ENCODE measurements at regions of chr15 and their contacts with region 1.

Region 1: DNA sequence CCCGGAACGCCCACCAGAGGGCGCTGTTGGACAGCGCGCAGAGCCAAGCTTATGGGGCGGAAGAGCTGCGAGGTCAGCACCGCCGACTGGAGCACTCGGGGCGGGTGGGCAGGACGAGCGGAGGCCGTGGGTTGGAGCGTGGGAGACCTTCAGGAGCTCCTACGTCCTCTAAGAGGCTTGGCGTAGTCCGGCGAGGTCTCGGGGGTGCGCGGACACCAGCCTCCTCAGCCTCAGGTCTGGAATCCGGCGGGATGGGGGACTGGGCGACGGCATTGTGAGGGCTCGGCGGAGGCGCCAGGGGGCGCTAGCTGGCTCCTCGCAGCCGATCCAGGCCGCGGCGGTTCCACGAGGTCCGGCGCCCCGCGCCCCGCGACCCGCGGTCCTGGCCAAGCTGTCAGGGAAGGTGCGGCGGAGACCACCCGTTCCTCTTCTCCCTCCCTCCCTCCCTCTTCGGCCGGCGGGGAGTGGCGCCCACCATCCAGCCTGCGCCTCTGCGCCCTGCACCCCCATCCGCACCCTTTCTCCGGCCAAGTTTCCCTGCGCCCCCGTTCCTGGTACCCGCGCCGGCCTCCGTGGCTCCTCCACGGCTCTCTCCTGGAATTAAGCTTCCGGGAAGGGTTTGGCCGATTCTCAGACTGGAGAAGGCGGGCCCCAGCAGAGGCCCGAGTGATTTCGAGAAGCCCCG is 24.3 kb upstream of the POLG start:
- DNase-seq: peak; percentile 56
- ATAC-seq: peak; percentile 96
- H3K4me3 ChIP-seq: peak overlapping the region; percentile 42
- H3K27ac ChIP-seq: no peak overlapping the region
- H3K4me1 ChIP-seq: no peaks in the 10 kb centered on the region
- H3K27me3 ChIP-seq: peaks cover 80% of the 10 kb centered on the region
- CTCF ChIP-seq: peak; percentile 80
- POLR2A ChIP-seq: no peak
- RAD21 ChIP-seq: peak; percentile 87

Region 2: DNA sequence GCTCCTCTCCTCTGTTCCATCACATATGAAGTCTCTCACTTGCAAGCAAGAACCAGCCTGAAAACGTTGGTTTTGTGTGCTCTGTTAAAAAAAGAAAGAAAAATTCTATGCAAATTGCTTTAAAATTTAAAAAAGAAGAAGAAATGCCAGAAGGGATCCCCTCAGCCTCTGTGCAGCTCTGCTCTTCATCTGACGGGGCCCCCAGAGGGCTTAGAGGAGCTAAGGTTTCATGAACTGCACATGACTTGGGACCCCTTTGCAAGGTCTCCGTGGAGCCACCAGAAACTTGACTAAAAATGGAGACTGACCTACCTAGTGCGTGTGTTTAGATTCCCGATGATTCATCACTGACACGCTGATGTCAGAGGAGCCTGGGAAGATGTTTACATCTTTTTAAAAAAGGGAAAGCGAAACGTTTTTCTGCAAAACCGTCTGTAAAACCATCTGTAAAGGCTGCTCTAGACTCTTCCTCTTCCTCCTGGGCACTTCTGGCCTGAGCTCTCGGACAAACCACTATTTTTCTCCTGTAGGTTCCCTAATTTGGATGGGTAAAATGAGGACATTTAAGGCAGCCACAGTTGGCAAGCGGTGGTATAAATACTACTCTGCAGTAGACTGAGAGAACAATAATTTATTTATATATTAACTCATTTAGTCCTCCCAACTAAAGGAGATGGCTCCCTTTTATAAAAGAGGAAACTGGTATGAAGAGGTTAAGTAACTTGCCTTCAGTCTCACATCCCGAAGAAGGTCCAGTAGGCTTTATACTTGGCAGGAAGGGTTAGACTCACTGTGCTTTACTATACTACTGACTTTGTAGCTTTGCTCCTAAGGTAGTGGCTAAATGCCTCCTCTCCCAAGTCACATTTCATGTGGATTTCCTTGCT is 43.0 kb after region 1 on chr15:
- CTCF ChIA-PET with region 1: interaction called, 5 read pairs
- POLR2A ChIA-PET with region 1: no interaction called
- dilution Hi-C with region 1: no loop called
- in situ Hi-C with region 1: no loop called
- intact Hi-C with region 1: loop called (anchors 2 kb)
- DNase-seq: peak; percentile 85
- ATAC-seq: peak; percentile 76
- H3K4me3 ChIP-seq: peak overlapping the region; percentile 33; the same call in 1 of the 2 replicates
- H3K27ac ChIP-seq: no peak overlapping the region
- H3K4me1 ChIP-seq: no peaks in the 10 kb centered on the region
- H3K27me3 ChIP-seq: peaks cover 71% of the 10 kb centered on the region
- CTCF ChIP-seq: no peak
- POLR2A ChIP-seq: no peak
- RAD21 ChIP-seq: no peak

Region 3: DNA sequence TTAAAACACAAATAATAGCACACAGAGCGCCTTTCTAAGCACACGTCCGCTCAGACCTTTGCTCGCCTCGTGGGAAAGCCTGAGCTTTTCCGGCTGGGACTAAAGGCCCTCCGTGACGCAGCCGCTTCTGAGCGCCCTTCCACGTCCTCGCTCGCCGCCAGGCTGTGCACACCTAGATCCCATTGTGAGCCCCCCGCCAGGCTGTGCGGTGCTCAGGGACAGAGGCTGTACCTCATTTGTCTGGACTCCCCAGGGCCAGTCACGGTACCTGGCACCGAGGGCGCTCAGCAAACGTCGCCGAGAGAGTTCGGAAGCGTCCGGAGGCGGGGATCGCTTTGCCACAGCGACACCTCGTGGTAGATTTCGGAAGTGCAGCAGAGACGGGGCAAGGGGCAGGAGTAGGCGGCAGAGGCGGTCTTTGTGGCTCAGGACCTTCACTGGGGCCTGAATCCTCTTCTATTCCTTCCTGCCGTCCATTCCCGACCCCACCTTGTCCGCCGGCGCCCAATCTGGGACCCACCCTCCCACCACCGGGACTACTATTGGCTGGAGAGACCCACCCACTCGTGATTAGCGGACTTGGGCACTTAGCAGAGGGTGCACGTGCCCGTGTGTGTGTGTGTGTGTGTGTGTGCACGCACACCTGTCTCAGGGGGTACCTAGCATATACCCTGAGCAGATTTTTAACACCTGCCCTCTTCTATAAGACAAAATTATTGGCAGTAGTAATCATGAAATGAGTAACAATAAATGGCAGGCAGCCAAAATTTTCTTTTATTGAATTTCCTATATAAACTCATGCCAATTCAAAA is 71.8 kb after region 1 on chr15:
- CTCF ChIA-PET with region 1: interaction called, 37 read pairs
- POLR2A ChIA-PET with region 1: no interaction called
- dilution Hi-C with region 1: no loop called
- in situ Hi-C with region 1: loop called (anchors 5 kb)
- intact Hi-C with region 1: loop called (anchors 1 kb)
- DNase-seq: peak; percentile 43
- ATAC-seq: peak; percentile 99
- H3K4me3 ChIP-seq: peak overlapping the region; percentile 42
- H3K27ac ChIP-seq: no peak overlapping the region
- H3K4me1 ChIP-seq: no peaks in the 10 kb centered on the region
- H3K27me3 ChIP-seq: peaks cover 43% of the 10 kb centered on the region
- CTCF ChIP-seq: peak; percentile 90
- POLR2A ChIP-seq: no peak
- RAD21 ChIP-seq: peak; percentile 81

Region 4: DNA sequence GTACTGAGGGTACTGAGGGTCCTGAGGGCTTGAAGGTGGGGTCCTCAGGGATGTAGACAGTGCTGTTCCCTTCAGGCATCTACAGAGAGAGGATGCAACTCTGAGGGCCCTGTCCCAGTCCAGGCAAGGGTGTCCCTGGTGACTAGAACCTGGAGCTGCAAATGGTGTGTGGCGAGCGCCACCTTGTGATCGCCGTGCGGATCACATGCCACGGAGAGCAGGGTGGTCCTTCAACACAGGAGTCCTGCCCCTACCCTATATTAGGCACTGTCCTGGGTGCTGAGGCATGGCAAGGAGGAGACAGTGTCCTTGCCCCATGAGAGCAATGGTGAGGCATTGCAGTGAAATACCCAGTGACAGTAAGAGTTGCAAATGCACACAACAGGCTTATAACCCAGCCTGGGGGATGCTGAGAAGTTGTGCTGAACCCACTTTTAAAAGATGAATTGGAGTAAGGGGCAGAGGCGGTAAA is 113.9 kb after region 1 on chr15:
- CTCF ChIA-PET with region 1: interaction called, 6 read pairs
- POLR2A ChIA-PET with region 1: no interaction called
- dilution Hi-C with region 1: no loop called
- in situ Hi-C with region 1: no loop called
- intact Hi-C with region 1: loop called (anchors 1 kb)
- DNase-seq: peak; percentile 47
- ATAC-seq: peak; percentile 92
- H3K4me3 ChIP-seq: no peak overlapping the region
- H3K27ac ChIP-seq: no peak overlapping the region
- H3K4me1 ChIP-seq: no peaks in the 10 kb centered on the region
- H3K27me3 ChIP-seq: peaks cover 32% of the 10 kb centered on the region
- CTCF ChIP-seq: peak; percentile 75
- POLR2A ChIP-seq: no peak
- RAD21 ChIP-seq: peak; percentile 84

Region 5: DNA sequence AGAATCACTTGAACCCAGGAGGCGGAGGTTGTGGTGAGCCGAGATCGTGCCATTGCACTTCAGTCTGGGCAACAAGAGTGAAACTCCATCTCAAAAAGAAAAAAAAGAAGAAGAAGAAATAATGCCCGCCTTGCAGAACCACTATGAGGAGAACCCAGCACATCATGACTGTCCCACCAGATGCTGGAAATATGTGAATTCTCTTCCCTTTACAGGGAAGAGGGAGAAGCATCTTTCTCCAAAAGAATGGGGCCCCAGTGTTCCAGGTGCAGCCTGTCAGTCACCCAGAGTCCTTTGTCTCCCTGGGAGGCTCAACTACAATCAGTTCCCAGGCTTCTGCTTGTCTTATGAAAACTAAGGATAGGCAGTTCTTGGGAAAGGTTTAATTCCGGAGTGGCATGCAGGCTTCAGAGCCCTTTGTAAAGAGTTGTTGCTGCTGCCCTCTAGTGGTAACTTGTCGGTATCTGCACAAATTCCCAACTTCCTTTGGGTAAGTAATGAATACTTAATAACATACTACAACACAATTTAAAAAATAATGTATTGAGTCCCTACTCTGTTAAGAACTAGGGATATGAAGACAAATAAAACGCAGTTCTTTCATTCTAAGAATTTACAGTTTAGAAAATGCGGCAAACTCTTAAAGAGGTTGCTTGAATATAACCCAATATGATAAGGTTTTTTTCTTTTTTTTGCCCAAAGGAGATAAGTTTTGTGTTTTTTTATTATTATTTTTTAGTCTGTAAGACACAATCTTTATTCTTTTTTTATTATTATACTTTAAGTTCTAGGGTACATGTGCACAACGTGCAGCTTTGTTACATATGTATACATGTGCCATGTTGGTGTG is 197.7 kb after region 1 on chr15:
- CTCF ChIA-PET with region 1: no interaction called
- POLR2A ChIA-PET with region 1: no interaction called
- dilution Hi-C with region 1: no loop called
- in situ Hi-C with region 1: no loop called
- intact Hi-C with region 1: loop called (anchors 1 kb)
- DNase-seq: peak; percentile 77
- ATAC-seq: peak; percentile 95
- H3K4me3 ChIP-seq: no peak overlapping the region
- H3K27ac ChIP-seq: no peak overlapping the region
- H3K4me1 ChIP-seq: no peaks in the 10 kb centered on the region
- H3K27me3 ChIP-seq: peaks cover 27% of the 10 kb centered on the region
- CTCF ChIP-seq: peak; percentile 79
- POLR2A ChIP-seq: no peak
- RAD21 ChIP-seq: peak; percentile 64